Posterior vena cava (tissue), 2 donors: ENCODE measurements at regions of chr4 and their contacts with region 1.

Region 1: GRCh38 chr4:129193357-129194100 is 97.6 kb downstream of the C4orf33 start:
- DNase-seq: no peak

Region 2: GRCh38 chr4:129239088-129239487 is 45.6 kb after region 1 on chr4:
- intact Hi-C with region 1: loop called in 1 of 2 experiments (anchors 2 kb)
- DNase-seq: no peak